PC-9 (cell line): ENCODE measurements at regions of chr1 and their contacts with region 1.

Region 1: DNA sequence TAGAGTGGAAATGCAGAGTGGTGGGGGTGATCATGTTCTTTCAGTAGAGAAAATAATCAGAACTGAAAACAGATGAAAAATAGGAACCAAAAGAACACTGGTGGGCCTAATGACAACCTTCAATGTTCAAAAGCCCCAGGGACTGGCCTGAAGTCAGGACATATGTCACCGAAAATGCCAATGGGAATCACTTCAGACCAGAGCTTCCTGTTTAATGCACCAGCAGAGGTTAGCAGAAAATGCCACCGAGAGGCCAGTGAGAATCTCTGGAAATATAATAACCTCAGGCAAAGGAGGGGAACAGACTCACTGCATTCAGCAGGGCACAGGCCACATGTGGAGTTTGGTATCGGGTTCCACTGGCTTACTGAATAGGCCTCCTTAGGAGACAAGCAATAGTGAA is 15.9 kb upstream of the CD58 start:
- DNase-seq: peak; percentile 15 to 80
- H3K4me3 ChIP-seq: no peak overlapping the region
- H3K27ac ChIP-seq: peak overlapping the region; percentile 54
- H3K4me1 ChIP-seq: peaks cover 41% of the 10 kb centered on the region
- H3K27me3 ChIP-seq: no peaks in the 10 kb centered on the region
- CTCF ChIP-seq: no peak

Region 2: GRCh38 chr1:116667575-116668105 is 80.9 kb after region 1 on chr1 and contains the start of gene IGSF3:
- CTCF ChIA-PET with region 1: no interaction called
- POLR2A ChIA-PET with region 1: no interaction called
- intact Hi-C with region 1: no loop called
- DNase-seq: peak; percentile 67 to 77
- H3K4me3 ChIP-seq: peak within 1 kb of the TSS; percentile 91
- H3K27ac ChIP-seq: peak within 1 kb of the TSS; percentile 42
- H3K4me1 ChIP-seq: peaks cover 39% of the 10 kb centered on the region
- H3K27me3 ChIP-seq: no peaks in the 10 kb centered on the region
- CTCF ChIP-seq: no peak
- total RNA-seq, gene IGSF3: 27.8 and 30.1 TPM in 2 replicates

Region 3: GRCh38 chr1:116794371-116794770 is 207.6 kb after region 1 on chr1:
- CTCF ChIA-PET with region 1: no interaction called
- POLR2A ChIA-PET with region 1: interaction called, 16 read pairs
- intact Hi-C with region 1: no loop called
- DNase-seq: no peak
- H3K4me3 ChIP-seq: no peak overlapping the region
- H3K27ac ChIP-seq: no peak overlapping the region
- H3K4me1 ChIP-seq: no peaks in the 10 kb centered on the region
- H3K27me3 ChIP-seq: no peaks in the 10 kb centered on the region
- CTCF ChIP-seq: no peak